ENCODE measurements at regions of chr5 and their contacts with region 1.

Region 1: DNA sequence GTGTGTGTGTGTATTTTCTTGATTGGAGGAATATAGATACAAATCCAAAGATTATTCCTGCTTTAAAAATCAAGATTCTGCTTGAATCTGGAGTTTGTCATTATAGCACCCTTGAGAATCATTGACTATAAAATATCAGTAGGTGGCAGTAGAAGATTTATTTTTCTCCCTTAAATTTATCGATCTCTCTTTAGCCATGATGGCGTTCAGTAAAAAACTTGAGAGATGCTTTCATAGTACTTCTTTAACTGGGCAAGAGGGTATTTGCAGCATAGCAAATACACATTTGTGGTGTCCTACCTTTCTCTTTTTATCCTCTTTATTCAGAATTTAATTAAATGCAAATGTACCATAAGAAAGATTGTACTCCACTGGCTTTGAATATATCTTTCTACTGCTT is 307.7 kb downstream of the ADGRV1 start:
- DNase-seq: no peak
- ATAC-seq: peak in 2 of 4 donors; percentile 61 to 62
- H3K4me3 ChIP-seq: no peak overlapping the region
- H3K27ac ChIP-seq: no peak overlapping the region
- H3K4me1 ChIP-seq: peaks cover 0 to 17% (median 1%) of the 10 kb centered on the region in 12 donors
- H3K27me3 ChIP-seq: no peaks in the 10 kb centered on the region
- CTCF ChIP-seq: peak; percentile 20 to 68 (median 55)
- POLR2A ChIP-seq: no peak

Region 2: GRCh38 chr5:90940227-90940995 is 74.1 kb after region 1 on chr5:
- intact Hi-C with region 1: no loop called
- DNase-seq: no peak
- ATAC-seq: peak in 1 of 4 donors; percentile 52
- H3K4me3 ChIP-seq: no peak overlapping the region
- H3K27ac ChIP-seq: peak overlapping the region in 1 of 12 donors; percentile 40
- H3K4me1 ChIP-seq: peaks cover 0 to 5% (median 0%) of the 10 kb centered on the region in 12 donors
- H3K27me3 ChIP-seq: no peaks in the 10 kb centered on the region
- CTCF ChIP-seq: no peak
- POLR2A ChIP-seq: no peak

Region 3: GRCh38 chr5:91225848-91226686 is 359.7 kb after region 1 on chr5:
- intact Hi-C with region 1: loop called in 2 of 10 experiments (anchors 10 kb)
- DNase-seq: peak in 2 of 5 donors; percentile 26 to 36
- ATAC-seq: peak in 2 of 4 donors; percentile 20 to 59
- H3K4me3 ChIP-seq: no peak overlapping the region
- H3K27ac ChIP-seq: no peak overlapping the region
- H3K4me1 ChIP-seq: peaks cover 0 to 10% (median 0%) of the 10 kb centered on the region in 12 donors
- H3K27me3 ChIP-seq: no peaks in the 10 kb centered on the region
- CTCF ChIP-seq: peak in 11 of 12 donors; percentile 9 to 53 (median 33)
- POLR2A ChIP-seq: no peak

Region 4: GRCh38 chr5:91419571-91420537 is 553.5 kb after region 1 on chr5:
- intact Hi-C with region 1: loop called in 9 of 10 experiments (anchors 2 to 5 kb)
- DNase-seq: peak in 4 of 5 donors; percentile 36 to 57 (median 46)
- ATAC-seq: no peak
- H3K4me3 ChIP-seq: no peak overlapping the region
- H3K27ac ChIP-seq: no peak overlapping the region
- H3K4me1 ChIP-seq: no peaks in the 10 kb centered on the region
- H3K27me3 ChIP-seq: no peaks in the 10 kb centered on the region
- CTCF ChIP-seq: peak; percentile 69 to 95 (median 83)
- POLR2A ChIP-seq: no peak

Measured in heart left ventricle (tissue), 16 donors.